ENCODE measurements at regions of chr14 and their contacts with region 1.

Region 1: GRCh38 chr14:76784266-76785264 is 23.3 kb downstream of the VASH1 start:
- DNase-seq: no peak
- H3K4me3 ChIP-seq: no peak overlapping the region
- CTCF ChIP-seq: peak; percentile 95

Region 2: DNA sequence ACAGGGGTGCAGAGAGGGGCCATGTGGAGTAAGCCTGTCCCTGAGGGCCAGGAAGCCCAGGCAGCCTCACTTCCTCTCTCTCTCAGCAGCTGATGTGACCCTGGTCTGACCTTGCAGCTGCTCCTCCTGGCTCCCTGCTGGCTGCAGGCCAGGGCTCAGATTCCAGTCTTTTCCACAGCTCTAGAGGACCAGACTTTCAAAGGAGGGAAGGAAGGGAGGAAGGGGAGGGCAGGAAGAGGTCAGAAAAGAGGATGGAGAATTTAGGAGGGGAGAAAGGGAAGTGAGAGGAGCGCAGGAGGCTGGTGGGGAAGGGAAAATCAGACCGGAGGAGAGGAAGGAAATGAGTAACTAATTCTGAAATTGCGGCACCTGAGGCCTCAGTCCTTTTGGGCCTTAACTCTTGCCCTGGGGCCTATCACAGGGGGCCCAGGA is 64.2 kb before region 1 on chr14:
- CTCF ChIA-PET with region 1: interaction called, 10 read pairs
- POLR2A ChIA-PET with region 1: no interaction called
- DNase-seq: no peak
- H3K4me3 ChIP-seq: no peak overlapping the region
- CTCF ChIP-seq: no peak

Region 3: GRCh38 chr14:76773188-76773885 is 11.2 kb before region 1 on chr14:
- CTCF ChIA-PET with region 1: interaction called, 42 read pairs
- POLR2A ChIA-PET with region 1: no interaction called
- DNase-seq: peak; percentile 24
- H3K4me3 ChIP-seq: no peak overlapping the region
- CTCF ChIP-seq: peak; percentile 15

Region 4: GRCh38 chr14:76806446-76806845 is 21.9 kb after region 1 on chr14:
- CTCF ChIA-PET with region 1: interaction called, 23 read pairs
- POLR2A ChIA-PET with region 1: no interaction called
- DNase-seq: no peak
- H3K4me3 ChIP-seq: no peak overlapping the region
- CTCF ChIP-seq: no peak

Measured in AG04449 (cell line).